GM13976 (cell line): ENCODE measurements at regions of chr2 and their contacts with region 1.

Region 1: DNA sequence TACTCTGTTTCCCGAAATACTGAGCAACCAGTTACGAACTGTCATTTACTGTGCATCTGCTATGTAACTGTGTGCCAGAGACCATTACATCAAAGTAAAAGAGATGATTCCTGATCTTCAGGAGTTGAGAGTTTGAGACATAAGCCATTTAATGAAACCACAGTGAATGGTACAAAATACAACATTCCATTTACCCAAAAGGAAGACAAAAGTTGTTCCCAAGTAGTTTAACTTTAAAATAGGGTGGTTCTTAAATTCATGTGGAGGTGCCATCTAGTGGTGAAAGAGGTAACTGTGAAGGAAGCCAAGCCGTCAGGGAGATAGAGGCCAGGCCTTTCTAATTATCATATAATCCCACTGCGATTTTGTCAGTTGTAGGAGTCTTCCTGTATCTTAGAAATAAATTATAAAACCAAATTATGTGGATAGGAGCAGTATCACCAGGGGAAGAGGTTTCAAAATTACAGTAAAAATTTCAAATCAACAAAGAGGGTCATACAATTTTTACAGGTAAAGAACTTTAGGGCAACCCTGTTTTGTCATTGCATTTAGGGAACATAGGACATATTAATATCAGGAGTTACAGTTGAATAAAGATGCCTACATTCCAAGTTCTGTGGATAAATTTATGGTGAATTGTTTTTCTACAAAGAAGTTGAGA is 67.7 kb downstream of the EPAS1 start:
- DNase-seq: peak; percentile 69
- CTCF ChIP-seq: peak; percentile 71

Region 2: GRCh38 chr2:45650851-45651414 is 714.0 kb before region 1 on chr2:
- in situ Hi-C with region 1: no loop called
- DNase-seq: peak; percentile 93
- CTCF ChIP-seq: peak; percentile 41

Region 3: DNA sequence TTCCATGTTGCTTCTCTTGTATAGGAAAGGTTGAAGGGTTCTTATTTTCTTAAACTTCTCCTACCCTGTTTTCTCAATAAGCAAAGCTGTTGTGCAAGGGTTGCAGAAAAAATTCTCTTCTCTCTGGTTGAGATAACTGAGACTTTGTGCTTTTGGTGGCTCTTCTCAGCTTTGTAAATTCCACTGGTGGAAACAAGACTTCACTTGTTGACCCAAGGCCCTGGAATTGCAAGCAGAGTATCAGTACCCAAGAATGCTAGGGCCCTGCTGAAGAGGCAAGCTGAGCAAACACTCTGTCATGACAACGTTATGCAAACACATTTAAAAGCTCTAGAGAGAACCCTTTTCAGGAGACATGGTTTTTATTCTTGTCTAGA is 362.4 kb before region 1 on chr2:
- in situ Hi-C with region 1: loop called (anchors 10 kb)
- DNase-seq: no peak
- CTCF ChIP-seq: no peak